Left cardiac atrium (tissue), 4 donors: ENCODE measurements at regions of chr12 and their contacts with region 1.

Region 1: DNA sequence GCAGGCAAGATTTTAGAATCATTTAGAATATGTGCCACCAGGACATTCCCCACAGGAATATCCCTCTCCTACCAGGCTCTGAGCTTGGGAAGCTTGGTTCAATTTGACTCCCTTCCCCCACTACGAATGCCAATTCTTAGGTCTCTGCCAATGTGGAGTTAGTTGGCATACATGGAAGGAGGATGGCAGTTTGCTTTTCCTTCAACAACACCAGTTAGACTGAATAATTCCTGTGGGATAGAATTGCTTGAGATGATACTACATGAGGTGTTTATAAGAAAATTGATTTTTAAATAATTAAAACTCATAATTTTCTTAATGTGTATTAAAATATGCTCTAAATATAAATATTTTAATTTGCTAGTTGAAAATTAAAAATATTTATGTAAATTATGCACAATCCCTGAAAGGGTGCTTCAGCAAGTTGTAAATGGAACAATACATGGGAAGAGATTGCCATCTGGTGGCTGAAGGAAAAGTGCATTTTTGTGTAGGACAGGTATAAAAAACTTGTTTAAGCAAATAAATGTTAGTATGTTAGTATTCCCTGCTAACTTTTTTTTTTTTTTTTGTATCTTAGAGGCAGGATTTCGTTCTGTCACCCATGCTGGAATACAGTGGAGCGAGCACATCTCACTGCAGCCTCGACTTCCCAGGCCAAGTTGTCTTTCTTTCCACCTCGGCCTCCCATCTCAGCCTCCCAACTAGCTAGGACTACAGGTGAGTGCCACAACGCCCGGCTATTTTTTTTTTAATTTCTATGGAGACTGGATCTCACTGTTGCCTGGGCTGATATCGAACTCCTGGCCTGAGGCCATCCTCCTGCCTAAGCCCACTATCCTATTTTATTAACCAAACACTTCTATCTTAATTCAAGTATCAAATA is 25.8 kb upstream of the STRAP start:
- DNase-seq: no peak
- ATAC-seq: peak; percentile 70 to 75

Region 2: GRCh38 chr12:15532364-15532977 is 323.9 kb before region 1 on chr12:
- intact Hi-C with region 1: loop called in 1 of 2 experiments (anchors 5 kb)
- DNase-seq: no peak
- ATAC-seq: peak; percentile 74 to 79

Region 3: DNA sequence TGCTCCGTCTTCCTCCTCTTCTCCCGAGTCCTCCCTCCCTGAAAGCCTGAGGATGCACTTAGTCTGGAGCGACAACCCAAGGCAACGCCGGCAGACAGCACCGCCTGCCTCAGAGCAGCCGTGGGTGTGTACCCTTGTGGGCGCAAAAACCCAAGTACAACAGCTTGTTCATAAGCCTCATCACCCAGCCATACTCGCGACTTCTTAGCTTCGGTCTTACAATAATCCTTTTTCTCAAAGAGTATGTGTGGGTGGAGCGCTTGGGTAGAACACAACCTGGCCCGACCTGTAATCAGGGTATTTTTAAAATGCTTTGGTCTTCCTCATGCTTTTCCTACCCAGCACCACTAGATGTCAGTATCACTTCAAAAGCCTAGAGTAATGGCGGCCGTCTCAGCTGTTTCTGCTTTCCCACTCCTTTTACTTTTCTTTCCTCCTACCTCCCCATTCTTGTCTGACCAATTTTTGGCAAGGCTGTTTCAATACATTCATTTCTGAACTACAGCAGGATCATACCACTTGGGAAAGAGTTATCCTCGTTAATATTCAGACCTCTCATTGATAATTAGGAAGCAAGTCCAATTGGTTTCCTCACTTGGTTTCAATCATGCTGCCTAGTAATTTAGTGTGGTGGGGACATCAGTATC is 266.0 kb before region 1 on chr12:
- intact Hi-C with region 1: loop called (anchors 1 to 2 kb)
- DNase-seq: peak; percentile 36
- ATAC-seq: peak; percentile 87 to 93